ENCODE measurements at regions of chr5 and their contacts with region 1.

Region 1: DNA sequence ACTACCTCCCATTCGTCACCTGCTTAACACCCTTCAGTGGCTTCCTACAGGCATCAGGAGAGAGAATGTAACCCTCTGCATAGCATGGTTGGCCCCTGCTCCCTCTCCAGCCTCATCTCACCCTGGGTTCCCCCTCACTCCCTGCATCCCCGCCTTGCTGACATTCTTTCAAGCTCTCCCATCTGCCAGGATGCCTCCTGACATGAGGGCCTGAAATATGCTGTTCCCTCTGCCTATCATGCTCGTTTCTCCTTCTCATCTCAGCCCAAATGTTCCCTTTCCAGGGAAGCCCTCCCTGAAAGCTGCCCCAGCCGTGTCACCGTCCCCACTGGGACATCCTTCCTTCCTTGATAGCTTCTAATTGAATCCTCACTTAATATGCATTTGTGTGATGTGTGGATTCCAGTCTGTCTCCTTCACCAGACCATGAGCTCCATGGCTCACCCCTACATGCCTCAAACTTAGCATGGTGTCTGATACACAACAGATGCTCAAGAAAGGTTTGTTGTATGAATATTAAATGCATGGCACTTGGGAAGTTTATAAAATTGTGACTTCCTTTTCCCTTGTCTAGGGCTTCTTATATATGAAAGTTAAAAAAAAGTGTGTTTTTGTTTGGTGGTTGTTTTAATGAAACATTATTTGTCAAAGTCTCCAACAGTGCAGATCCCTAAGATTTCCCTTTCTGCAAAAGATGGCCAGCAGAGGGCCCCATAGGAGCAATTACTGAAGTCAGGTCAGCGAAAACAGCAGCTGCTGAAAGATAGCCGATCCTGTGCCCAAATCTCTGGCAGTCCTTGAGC is 7.3 kb upstream of the C5orf58 start:
- DNase-seq: peak; percentile 83
- H3K4me3 Mint-ChIP-seq: no peak overlapping the region
- H3K27ac Mint-ChIP-seq: no peak overlapping the region
- H3K4me1 Mint-ChIP-seq: no peaks in the 10 kb centered on the region
- H3K27me3 Mint-ChIP-seq: no peaks in the 10 kb centered on the region
- CTCF ChIP-seq: peak; percentile 90

Region 2: GRCh38 chr5:170235876-170236864 is 10.6 kb after region 1 on chr5:
- CTCF ChIA-PET with region 1: interaction called, 75 read pairs
- POLR2A ChIA-PET with region 1: no interaction called
- intact Hi-C with region 1: no loop called
- DNase-seq: no peak
- H3K4me3 Mint-ChIP-seq: no peak overlapping the region
- H3K27ac Mint-ChIP-seq: no peak overlapping the region
- H3K4me1 Mint-ChIP-seq: no peaks in the 10 kb centered on the region
- H3K27me3 Mint-ChIP-seq: peaks cover 22% of the 10 kb centered on the region
- CTCF ChIP-seq: no peak

Region 3: DNA sequence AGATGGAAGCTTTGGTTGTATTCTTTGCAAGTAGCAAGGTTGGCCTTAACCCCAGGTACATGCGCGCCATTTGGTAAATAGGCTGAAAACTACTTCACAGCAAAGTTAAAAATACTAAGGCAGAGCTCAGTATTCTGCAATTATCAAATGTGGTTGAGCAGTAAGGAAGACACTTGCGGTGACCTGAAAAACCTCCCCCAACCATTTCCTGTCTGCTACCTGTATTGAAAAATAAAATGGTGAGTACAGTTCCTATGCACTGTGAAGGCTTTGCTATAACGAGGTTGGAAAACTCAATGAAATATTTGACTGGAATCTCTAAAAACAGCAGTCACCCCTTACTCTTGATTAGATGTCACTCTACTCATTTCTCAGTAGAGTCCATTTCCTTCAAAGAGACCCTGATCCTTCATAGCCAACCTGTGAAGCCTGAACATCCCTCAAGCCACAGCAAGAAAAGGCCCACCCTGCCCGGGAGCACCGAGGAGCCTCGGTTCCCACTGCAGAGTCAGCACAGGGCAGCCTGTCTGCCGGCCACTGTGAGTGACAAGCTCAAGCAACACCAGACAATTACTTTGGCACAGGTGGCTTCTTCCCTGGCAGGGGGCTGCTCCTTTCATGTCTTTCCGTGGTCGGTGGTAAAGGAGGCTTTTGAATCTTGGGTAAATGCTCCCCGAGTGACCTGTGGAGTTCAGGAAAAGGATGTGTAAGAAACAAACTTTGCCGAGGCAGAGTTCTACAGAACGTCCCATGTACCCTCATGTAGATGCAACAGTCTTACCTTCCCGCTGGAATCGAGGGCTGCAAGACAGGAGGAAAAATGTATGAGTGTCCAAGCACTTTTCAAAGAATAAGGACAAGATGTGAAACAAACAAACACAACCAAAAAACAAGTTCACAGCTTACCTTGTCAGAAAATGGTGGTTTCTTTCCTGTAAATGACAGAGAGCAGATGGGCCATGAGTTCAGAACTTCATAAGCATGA is 36.8 kb after region 1 on chr5:
- CTCF ChIA-PET with region 1: interaction called, 82 read pairs
- POLR2A ChIA-PET with region 1: no interaction called
- intact Hi-C with region 1: no loop called
- DNase-seq: no peak
- H3K4me3 Mint-ChIP-seq: no peak overlapping the region
- H3K27ac Mint-ChIP-seq: no peak overlapping the region
- H3K4me1 Mint-ChIP-seq: no peaks in the 10 kb centered on the region
- H3K27me3 Mint-ChIP-seq: peaks cover 44% of the 10 kb centered on the region
- CTCF ChIP-seq: no peak

Region 4: GRCh38 chr5:170338933-170339779 is 113.6 kb after region 1 on chr5:
- CTCF ChIA-PET with region 1: interaction called, 5 read pairs
- POLR2A ChIA-PET with region 1: no interaction called
- intact Hi-C with region 1: loop called (anchors 2 kb)
- DNase-seq: peak; percentile 66
- H3K4me3 Mint-ChIP-seq: no peak overlapping the region
- H3K27ac Mint-ChIP-seq: no peak overlapping the region
- H3K4me1 Mint-ChIP-seq: peaks cover 6% of the 10 kb centered on the region
- H3K27me3 Mint-ChIP-seq: no peaks in the 10 kb centered on the region
- CTCF ChIP-seq: peak; percentile 46

Region 5: GRCh38 chr5:170408226-170408625 is 182.7 kb after region 1 on chr5:
- CTCF ChIA-PET with region 1: interaction called, 465 read pairs
- POLR2A ChIA-PET with region 1: no interaction called
- intact Hi-C with region 1: no loop called
- DNase-seq: no peak
- H3K4me3 Mint-ChIP-seq: no peak overlapping the region
- H3K27ac Mint-ChIP-seq: no peak overlapping the region
- H3K4me1 Mint-ChIP-seq: no peaks in the 10 kb centered on the region
- H3K27me3 Mint-ChIP-seq: peaks cover 20% of the 10 kb centered on the region
- CTCF ChIP-seq: no peak

Region 6: GRCh38 chr5:170614720-170615119 is 389.2 kb after region 1 on chr5:
- CTCF ChIA-PET with region 1: interaction called, 13 read pairs
- POLR2A ChIA-PET with region 1: no interaction called
- intact Hi-C with region 1: no loop called
- DNase-seq: peak; percentile 98
- H3K4me3 Mint-ChIP-seq: peak overlapping the region; percentile 56
- H3K27ac Mint-ChIP-seq: peak overlapping the region; percentile 87
- H3K4me1 Mint-ChIP-seq: peaks cover 22% of the 10 kb centered on the region
- H3K27me3 Mint-ChIP-seq: peaks cover 22% of the 10 kb centered on the region
- CTCF ChIP-seq: no peak

Measured in MCF 10A (cell line).